Panc1 (cell line): ENCODE measurements at regions of chr5 and their contacts with region 1.

Region 1: DNA sequence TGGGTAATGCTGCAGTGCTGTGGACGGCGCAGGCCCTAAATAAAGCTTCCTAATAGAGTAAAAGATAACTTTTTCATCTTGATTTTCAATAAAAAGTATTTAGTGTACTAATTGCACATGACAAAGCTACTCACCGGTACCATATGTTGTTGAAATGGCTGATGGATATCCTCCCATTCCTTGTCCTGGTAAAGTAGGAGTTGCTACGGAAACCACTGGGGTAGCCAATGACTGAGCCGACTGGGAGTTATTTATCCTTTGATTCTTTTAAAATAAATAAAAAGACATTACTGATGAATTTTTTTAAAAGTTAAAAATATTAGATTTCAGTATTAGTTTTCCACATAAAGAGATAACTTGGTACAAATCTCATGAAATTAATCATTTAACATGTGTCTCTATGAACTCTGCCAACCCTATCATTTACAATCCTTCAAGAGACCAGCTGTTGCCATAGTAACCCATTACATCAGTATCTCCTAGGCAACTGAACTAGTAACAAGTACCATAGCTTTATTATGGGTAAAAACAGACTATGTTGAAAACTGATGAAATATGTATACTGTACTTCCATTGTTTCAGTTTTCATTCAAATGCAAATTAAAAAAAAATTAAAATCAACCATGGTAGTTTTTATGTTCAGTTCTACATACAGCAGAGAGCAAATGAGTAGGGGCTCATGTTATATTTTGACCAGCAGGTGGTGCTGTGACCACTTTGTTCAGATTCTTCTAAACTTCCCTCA is 153.7 kb downstream of the MEF2C start:
- DNase-seq: peak; percentile 73
- ATAC-seq: peak; percentile 94
- H3K4me3 ChIP-seq: no peak overlapping the region
- H3K27ac ChIP-seq: no peak overlapping the region
- H3K4me1 ChIP-seq: peaks cover 10% of the 10 kb centered on the region
- H3K27me3 ChIP-seq: no peaks in the 10 kb centered on the region
- CTCF ChIP-seq: peak; percentile 71; the same call in 1 of the 2 replicates

Region 2: GRCh38 chr5:88792144-88792840 is 63.0 kb after region 1 on chr5:
- CTCF ChIA-PET with region 1: no interaction called
- POLR2A ChIA-PET with region 1: no interaction called
- in situ Hi-C with region 1: no loop called
- intact Hi-C with region 1: no loop called
- DNase-seq: no peak
- ATAC-seq: no peak
- H3K4me3 ChIP-seq: no peak overlapping the region
- H3K27ac ChIP-seq: no peak overlapping the region
- H3K4me1 ChIP-seq: no peaks in the 10 kb centered on the region
- H3K27me3 ChIP-seq: no peaks in the 10 kb centered on the region
- CTCF ChIP-seq: no peak

Region 3: GRCh38 chr5:89105836-89106235 is 376.6 kb after region 1 on chr5:
- CTCF ChIA-PET with region 1: no interaction called
- POLR2A ChIA-PET with region 1: no interaction called
- in situ Hi-C with region 1: no loop called
- intact Hi-C with region 1: no loop called
- DNase-seq: no peak
- ATAC-seq: no peak
- H3K4me3 ChIP-seq: no peak overlapping the region
- H3K27ac ChIP-seq: no peak overlapping the region
- H3K4me1 ChIP-seq: no peaks in the 10 kb centered on the region
- H3K27me3 ChIP-seq: no peaks in the 10 kb centered on the region
- CTCF ChIP-seq: no peak

Region 4: DNA sequence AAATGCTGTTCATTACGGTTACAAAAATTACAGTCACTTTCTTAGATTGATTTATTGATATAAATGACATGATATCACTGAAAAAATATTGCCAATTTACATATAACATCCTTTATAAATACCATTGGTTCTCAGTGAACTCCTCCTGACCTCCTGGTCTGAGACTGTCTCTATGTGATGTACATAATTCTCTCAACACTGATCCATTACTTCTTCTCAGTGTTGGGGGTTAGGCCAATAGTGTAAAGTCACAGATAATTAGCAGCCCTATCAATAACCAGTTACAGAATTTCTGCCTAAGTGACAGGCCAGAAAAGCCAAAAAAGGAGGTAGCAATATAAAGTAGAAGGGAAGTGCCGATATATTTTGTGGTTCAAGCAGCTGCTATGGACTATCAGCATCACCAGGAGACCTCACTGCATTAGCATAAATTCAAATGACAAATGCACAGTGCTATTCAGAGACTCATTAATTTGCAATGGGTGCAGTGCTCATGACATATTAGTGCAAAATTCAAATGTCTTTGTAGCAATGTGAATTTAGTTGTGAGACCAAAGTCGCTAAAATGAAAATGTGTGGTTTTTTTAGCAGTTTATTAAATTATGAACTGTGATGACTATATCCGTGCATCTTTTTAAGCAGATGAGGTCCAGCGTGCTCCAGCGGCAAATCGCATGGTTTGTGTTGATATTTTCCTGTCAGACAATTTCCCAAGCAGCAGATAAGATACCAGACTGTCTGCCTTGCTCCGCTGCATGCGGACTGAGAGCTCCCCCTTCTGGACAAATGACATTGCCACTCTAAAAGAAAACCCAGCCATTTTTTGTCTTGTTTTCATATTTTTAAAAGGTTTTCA is 1535.7 kb after region 1 on chr5:
- CTCF ChIA-PET with region 1: interaction called, 3 read pairs
- POLR2A ChIA-PET with region 1: no interaction called
- in situ Hi-C with region 1: no loop called
- intact Hi-C with region 1: loop called (anchors 5 kb)
- DNase-seq: peak; percentile 58
- ATAC-seq: peak; percentile 81
- H3K4me3 ChIP-seq: no peak overlapping the region
- H3K27ac ChIP-seq: no peak overlapping the region
- H3K4me1 ChIP-seq: no peaks in the 10 kb centered on the region
- H3K27me3 ChIP-seq: no peaks in the 10 kb centered on the region
- CTCF ChIP-seq: peak; percentile 96

Region 5: DNA sequence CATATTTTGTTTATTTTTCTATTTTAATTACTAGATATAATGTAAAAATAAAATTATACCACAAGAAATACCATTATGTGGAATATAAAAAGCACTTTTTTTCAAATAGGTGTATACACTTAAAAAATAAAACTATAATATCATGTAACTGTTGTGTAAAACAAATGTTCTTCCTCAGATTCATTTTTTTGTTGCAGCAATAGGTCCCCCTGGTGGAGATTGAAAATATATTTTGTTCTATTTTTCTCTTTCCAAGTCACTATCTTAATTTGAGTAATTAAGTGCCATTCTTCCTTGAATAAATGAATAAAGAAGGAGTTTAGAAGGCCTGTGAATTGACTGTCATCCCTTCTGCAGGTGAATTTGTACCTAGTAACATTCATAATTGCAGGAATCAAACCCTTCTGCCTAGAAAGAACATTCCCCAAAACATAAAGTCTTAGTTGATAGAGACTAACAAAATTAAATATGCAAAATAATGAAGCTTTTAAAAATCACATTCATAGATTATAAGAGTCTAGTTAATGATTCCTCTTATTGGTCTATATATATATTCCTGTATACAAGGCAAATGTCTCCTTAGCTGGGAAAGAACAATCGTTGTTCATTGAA is 1656.9 kb after region 1 on chr5:
- CTCF ChIA-PET with region 1: no interaction called
- POLR2A ChIA-PET with region 1: no interaction called
- in situ Hi-C with region 1: no loop called
- intact Hi-C with region 1: loop called (anchors 5 kb)
- DNase-seq: no peak
- ATAC-seq: no peak
- H3K4me3 ChIP-seq: no peak overlapping the region
- H3K27ac ChIP-seq: no peak overlapping the region
- H3K4me1 ChIP-seq: no peaks in the 10 kb centered on the region
- H3K27me3 ChIP-seq: no peaks in the 10 kb centered on the region
- CTCF ChIP-seq: peak; percentile 49; the same call in 1 of the 2 replicates